Endothelial cell of umbilical vein (primary cell): ENCODE measurements at regions of chr17 and their contacts with region 1.

Region 1: GRCh38 chr17:49454050-49454449 is 39.4 kb upstream of the PHB1 start:
- DNase-seq: no peak
- H3K4me3 ChIP-seq: no peak overlapping the region
- H3K27ac ChIP-seq: no peak overlapping the region
- H3K4me1 ChIP-seq: no peaks in the 10 kb centered on the region
- H3K27me3 ChIP-seq: peaks cover 19 to 21% of the 10 kb centered on the region in 2 experiments
- CTCF ChIP-seq: no peak
- POLR2A ChIP-seq: no peak

Region 2: GRCh38 chr17:49548506-49549310 is 94.7 kb after region 1 on chr17:
- CTCF ChIA-PET with region 1: no interaction called
- POLR2A ChIA-PET with region 1: interaction called, 10 read pairs
- dilution Hi-C with region 1: no loop called
- intact Hi-C with region 1: no loop called
- DNase-seq: no peak
- H3K4me3 ChIP-seq: no peak overlapping the region
- H3K27ac ChIP-seq: no peak overlapping the region
- H3K4me1 ChIP-seq: no peaks in the 10 kb centered on the region
- H3K27me3 ChIP-seq: no peaks in the 10 kb centered on the region
- CTCF ChIP-seq: peak; percentile 25 to 59
- POLR2A ChIP-seq: no peak